PC-9 (cell line): ENCODE measurements at regions of chr6 and their contacts with region 1.

Region 1: GRCh38 chr6:41430875-41431274 is 95.5 kb downstream of the NCR2 start:
- DNase-seq: peak; percentile 35 to 56
- H3K4me3 ChIP-seq: no peak overlapping the region
- H3K27ac ChIP-seq: no peak overlapping the region
- H3K4me1 ChIP-seq: peaks cover 14% of the 10 kb centered on the region
- H3K27me3 ChIP-seq: 0 out of 2 replicates have a peak, but pooled peaks cover 11% of the 10 kb centered on the region
- CTCF ChIP-seq: no peak

Region 2: DNA sequence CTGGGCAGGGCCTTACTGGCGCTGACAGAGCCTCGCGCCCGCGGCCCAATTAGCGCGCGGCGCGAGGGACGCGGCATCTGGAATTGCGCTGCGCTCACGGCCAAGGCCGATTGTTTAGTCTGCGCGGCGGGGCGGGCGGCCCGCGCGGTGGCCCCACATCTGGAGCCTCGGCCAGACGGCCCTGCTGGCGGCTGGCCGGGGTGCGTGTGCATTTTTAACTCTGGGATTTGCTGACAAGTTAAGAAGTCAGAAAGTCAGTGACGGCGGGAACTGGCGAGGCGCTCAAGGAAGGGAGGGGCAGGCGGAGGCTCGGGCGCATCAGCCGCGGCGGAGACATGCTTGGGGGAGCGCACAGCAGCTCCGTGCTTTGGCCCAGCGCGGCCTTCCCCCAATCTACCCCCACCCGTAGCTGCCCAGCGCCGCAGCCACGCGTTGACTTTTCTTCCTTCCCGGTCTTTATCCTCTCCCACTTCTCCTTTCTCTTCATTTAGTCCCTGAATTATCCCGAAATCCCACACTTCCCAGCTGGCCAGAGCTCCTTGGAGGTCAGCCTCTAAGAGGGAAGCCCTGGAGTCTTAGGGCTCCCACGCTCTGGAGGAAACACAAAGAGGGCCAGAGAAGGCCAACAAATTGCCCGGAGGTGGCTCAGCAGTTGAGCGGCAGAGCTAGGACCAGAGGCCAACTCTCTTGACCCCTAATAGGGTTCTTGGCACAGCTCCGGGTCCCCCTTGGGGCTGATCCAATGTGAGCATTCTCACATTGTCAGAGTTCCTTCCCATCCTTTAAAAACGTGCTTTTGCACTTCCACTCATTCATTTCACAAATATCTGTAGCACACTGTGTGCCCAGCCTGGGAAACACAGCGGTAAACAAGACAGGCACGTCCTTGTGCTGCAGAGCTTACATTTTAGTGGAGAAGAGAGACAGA is 74.5 kb after region 1 on chr6:
- CTCF ChIA-PET with region 1: no interaction called
- POLR2A ChIA-PET with region 1: interaction called, 24 read pairs
- intact Hi-C with region 1: no loop called
- DNase-seq: peak in 1 of 2 experiments; percentile 25
- H3K4me3 ChIP-seq: no peak overlapping the region
- H3K27ac ChIP-seq: no peak overlapping the region
- H3K4me1 ChIP-seq: 0 out of 2 replicates have a peak, but pooled peaks cover 6% of the 10 kb centered on the region
- H3K27me3 ChIP-seq: peaks cover 34% of the 10 kb centered on the region
- CTCF ChIP-seq: no peak